ENCODE measurements at regions of chr3 and their contacts with region 1.

Region 1: GRCh38 chr3:52606373-52607085 is 70.1 kb downstream of the UQCC5 start:
- DNase-seq: no peak
- ATAC-seq: peak; percentile 37

Region 2: DNA sequence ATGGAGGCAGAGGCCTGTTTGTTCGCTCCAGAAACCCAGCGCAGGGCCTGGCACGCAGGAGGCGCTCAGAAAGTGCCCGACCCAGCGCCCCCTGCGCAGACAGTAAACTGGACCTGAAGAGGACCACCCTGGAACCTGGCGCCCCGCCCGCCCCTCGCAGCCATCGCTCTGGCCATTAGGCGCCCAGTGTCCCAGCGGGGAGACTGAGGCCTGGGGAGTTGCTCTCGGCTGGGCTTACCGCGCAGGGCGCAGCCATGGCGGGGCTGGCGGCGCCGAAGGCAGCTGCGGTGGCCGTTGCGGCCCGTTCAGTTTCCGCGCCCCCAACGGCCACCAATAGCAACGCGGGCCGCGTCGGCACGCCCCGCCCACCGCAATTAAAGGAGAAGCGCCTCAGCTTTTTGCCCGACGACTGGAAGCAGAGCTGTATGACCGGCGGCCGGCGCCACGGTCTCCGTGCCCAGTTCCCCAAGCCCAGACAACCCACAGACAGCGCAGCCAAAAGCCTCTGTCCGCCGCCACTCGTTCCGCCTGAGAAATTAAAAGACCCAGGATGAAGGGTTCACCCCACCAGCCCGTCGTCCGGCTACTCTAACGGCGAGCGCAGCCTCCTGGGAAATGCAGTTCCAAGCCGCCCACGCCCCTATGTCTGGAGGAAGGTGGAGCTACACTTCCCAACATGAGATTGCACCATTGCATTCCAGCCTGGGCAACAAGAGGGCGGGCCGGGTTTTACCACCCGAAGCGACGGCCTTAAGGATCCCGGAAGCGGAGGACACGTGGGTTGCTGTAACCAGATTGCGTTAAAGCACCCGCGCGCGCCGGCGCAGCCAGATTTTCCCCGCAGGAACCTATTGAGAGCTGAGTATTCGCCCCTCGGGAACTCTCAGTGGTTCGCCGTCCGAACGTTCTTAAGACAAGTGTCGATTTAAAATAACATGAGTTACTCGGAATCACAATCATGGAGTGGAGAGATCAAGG is 452.1 kb before region 1 on chr3 and contains the start of gene POC1A:
- intact Hi-C with region 1: no loop called
- DNase-seq: peak; percentile 98
- ATAC-seq: peak; percentile 98
- total RNA-seq, gene POC1A: 1.7 TPM

Region 3: DNA sequence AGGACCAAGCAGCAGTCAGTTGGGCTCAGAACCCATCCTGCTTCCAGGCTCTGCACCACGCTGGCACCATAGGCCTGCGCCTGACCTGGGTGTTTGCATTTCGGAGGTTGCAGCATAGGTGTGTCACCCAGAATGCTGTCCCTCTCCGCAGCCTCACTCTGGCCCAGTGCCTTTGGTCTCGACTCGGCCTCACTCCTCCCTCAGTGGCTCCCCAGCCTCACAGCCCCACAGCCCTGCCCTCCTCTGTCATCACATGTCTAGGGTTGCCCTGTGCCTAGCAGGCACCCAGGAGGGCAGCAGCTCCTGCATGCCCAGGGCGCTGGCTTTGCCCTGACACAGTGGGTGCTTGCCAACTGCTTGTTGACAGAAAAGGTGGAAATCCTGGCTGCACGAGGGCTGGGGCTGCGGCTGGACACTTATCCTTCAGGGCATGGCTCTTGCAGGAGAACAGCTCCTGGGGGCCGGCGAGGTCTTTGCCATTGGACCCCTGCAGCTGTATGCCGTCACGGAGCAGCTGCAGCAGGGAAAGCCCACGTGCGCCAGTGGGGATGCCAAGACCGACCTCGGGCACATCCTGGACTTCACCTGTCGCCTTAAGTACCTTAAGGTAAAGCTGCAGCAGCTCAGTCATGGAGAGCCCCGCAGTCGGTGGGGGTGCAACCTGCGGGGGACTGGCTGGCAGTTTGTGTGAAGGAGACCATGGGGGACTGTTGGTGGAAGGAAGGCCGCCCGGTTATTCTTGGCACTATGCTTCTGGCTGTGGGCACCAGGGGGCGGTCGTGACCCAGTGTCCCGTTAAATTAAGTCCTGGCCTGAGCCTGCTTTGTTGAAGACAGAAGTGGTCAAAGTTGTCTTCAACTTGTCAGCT is 134.9 kb before region 1 on chr3:
- intact Hi-C with region 1: loop called (anchors 5 kb)
- DNase-seq: peak; percentile 89
- ATAC-seq: peak; percentile 83

Region 4: DNA sequence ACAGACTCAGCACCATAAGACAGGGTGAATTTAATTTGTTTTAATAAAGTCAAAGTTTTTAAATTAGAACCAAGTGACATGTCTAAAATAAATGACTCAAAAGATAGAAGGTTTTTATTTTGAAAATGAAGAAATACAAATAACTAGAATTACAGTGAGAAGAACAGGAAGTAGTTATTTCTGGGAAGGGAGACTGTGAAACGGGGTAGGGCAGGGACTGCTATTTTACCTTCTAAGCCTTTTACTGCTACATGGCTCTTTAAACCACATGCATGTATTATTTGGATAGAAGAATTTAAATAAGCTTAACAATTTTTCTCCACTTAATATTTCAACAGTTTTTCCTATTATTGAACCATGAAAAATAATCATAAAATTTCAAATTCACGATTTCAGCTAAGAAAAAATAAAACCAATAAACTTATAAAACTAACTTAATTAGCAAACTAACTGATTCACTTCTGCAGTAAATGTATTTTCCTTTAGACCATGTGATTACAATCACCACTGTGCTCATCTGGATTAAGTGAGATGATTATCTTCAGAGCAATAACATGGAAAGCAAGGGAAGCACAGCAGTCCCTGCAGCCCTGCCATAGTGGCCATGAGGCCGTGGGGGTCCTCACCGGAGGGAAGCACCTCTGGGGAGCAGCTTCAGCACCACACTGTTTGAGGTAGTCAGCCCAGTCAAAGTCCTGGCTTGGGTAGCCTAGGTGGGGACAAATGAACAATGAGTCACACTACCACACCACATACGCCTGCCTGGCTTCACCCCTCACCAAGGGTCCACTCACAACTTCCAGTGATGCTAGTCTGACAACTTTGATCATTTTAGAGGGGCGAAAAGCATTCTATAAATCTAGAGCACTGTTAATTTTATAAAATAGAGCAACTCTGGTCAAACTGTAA is 319.1 kb after region 1 on chr3:
- intact Hi-C with region 1: no loop called
- DNase-seq: no peak
- ATAC-seq: no peak